AG04449 (cell line): ENCODE measurements at regions of chr11 and their contacts with region 1.

Region 1: GRCh38 chr11:2975594-2975993 is 16.5 kb downstream of the NAP1L4 start:
- DNase-seq: no peak
- H3K4me3 ChIP-seq: no peak overlapping the region
- CTCF ChIP-seq: peak; percentile 60

Region 2: DNA sequence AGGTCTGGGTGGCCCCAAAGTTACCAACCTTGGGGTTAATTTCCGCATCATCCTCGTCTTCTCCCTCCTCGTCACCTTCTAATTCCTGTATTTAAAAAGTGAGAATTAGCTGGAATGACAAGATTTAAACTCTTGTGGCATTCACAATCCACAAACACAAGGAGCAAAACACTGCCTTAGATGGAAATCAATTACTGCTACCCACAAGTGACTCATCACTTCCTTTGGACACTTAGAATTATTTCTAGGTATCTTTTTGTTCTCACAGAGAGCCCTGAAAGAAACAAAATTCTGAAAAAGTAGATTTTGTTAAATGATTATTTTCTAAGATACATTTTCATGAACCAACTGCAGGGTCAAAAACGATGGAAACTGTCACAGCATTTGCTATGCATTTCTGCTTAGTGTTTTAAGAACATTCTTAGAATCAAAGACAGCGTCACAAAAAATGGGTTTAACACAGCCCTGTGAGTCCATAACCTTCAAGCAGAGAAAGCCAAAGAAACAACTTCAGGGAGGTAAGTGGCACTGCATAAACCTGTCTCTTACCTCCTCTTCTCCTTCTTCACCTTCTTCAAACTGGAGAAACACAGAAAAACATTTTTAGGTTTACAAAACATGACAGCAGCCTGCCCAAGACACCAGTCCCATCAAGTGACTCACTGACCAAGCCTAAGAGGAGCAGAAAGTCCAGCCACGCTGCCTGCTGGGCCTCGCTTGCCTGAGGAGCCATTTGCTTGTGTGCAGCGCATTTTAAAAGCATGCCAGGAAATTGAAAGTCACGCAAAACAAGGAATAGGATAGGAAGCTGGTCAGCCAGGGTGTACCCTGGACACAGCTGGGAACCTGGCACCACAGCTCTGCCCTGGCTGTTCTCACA is 24.1 kb before region 1 on chr11:
- CTCF ChIA-PET with region 1: interaction called, 12 read pairs
- POLR2A ChIA-PET with region 1: no interaction called
- DNase-seq: no peak
- H3K4me3 ChIP-seq: no peak overlapping the region
- CTCF ChIP-seq: no peak

Region 3: DNA sequence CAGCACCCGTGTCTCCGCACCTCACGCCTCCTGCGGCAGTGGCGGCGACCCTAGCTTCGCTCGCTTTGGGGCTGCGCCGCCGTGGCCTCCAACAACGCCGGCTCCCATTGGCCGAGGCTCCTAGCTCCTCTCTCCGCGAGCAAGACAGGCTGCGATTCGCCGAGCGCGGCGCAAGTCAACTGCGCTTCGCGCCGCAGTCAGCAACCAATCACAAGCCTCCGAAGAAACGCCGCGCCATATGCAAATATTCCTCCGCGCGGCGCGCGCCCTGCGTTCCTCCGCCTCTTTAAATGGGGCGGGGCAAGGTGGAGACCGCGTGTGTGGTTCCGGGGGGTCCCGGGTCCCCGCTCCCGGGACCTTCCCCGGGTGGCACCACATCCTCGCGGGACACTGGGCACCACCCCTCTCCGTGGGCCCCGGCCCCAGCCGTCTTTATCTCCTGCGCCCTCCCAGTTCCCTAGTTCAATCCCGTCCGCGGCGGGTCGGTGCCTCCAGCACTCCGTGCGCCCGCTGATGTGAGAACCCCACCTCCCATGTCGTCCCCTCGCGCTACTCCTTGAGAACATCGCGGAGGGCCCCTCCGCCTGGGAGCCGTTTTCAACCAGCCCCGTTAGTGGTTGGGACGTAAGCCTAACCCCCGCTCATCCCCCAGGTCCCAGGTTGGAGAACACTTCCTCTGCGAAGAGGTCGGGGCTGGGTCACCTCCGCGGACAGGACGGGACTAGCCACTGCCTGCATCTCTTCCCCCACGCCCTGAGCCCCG is 16.8 kb after region 1 on chr11 and contains the start of gene NAP1L4:
- CTCF ChIA-PET with region 1: interaction called, 15 read pairs
- POLR2A ChIA-PET with region 1: interaction called, 3 read pairs
- DNase-seq: peak; percentile 67
- H3K4me3 ChIP-seq: peak within 1 kb of the TSS; percentile 89
- CTCF ChIP-seq: no peak

Region 4: DNA sequence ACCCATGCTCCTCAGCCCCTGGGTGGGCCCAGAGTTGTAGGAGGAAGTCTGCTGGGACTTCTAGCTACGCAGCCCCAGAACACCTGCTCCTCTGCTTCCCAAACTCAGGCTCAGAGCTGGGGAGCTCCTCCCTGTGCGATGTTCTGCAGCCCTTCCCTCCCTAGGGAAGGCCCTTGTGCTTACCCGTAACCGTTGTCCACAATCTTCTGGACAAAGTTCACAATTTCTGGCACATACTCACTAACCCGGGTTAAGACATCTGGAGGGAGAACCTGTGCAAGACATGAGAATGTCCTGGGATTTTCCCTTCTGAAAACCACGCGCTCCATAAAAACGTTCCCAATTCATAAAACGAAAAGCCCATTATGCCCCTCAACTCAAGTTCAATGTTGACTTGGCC is 53.2 kb after region 1 on chr11:
- CTCF ChIA-PET with region 1: no interaction called
- POLR2A ChIA-PET with region 1: no interaction called
- DNase-seq: no peak
- H3K4me3 ChIP-seq: no peak overlapping the region
- CTCF ChIP-seq: no peak